Stomach (tissue), 19 donors: ENCODE measurements at regions of chr14 and their contacts with region 1.

Region 1: GRCh38 chr14:91177073-91178034 is 63.5 kb downstream of the DGLUCY start:
- DNase-seq: peak; percentile 65 to 84
- H3K4me3 ChIP-seq: no peak overlapping the region
- H3K27ac ChIP-seq: peak overlapping the region in 3 of 5 donors; percentile 11 to 47 (median 44)
- H3K4me1 ChIP-seq: peaks cover 0 to 22% (median 10%) of the 10 kb centered on the region in 4 donors
- H3K27me3 ChIP-seq: no peaks in the 10 kb centered on the region
- CTCF ChIP-seq: peak in 5 of 7 experiments; percentile 57 to 77 (median 65)
- EP300 ChIP-seq: no peak
- POLR2A ChIP-seq: no peak

Region 2: DNA sequence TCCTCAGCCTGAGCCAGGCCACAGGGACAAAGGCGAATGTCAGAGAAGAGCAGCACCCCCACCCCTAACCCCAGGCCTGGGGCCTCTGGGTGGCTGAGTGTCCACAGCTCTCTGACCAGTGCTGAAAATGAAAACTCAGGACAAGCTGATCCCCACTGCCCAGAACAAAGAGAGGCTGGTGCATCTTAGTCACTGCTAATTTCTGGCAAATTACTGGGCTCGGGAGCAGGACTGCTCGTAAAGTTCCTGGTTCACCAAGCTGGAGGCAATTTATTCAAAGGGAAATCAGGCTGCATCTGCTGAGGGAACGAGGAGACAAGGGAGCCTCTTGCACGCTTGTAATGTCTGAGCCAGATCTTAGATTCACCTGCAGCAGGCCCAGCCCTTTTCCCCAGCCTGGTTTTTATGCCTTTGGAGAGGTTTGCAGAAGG is 737.3 kb before region 1 on chr14:
- intact Hi-C with region 1: no loop called
- DNase-seq: no peak
- H3K4me3 ChIP-seq: no peak overlapping the region
- H3K27ac ChIP-seq: no peak overlapping the region
- H3K4me1 ChIP-seq: no peaks in the 10 kb centered on the region
- H3K27me3 ChIP-seq: no peaks in the 10 kb centered on the region
- CTCF ChIP-seq: no peak
- EP300 ChIP-seq: no peak
- POLR2A ChIP-seq: no peak

Region 3: DNA sequence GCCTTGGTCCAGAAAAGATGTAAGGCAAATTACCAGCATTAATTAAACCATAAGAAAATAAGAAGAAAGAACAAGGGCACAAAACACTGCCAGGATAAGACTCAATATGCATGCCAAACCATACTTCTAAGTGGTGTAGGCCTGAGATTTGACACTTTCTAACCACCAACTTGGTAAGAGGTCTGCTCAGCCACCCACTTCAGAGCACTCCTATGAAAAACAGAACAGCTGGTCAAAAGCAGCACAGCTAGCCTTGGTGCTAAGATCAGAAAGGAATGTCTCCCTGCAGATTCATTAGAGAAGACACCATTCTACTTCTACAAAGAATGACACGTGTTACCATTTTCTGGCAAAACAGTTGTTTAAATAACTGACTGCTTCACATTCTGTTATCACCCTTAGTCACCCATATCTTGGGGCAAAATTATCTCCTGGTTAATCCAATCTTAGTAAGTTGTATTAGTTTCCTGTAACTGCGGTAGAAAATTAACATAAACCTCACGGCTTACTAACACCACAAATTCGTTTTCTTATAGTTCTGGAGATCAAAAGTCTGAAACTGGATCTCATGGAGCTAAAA is 130.1 kb before region 1 on chr14:
- intact Hi-C with region 1: no loop called
- DNase-seq: no peak
- H3K4me3 ChIP-seq: no peak overlapping the region
- H3K27ac ChIP-seq: no peak overlapping the region
- H3K4me1 ChIP-seq: peaks cover 0 to 38% (median 15%) of the 10 kb centered on the region in 4 donors
- H3K27me3 ChIP-seq: no peaks in the 10 kb centered on the region
- CTCF ChIP-seq: no peak
- EP300 ChIP-seq: no peak
- POLR2A ChIP-seq: no peak

Region 4: GRCh38 chr14:91286530-91286937 is 109.2 kb after region 1 on chr14:
- intact Hi-C with region 1: loop called (anchors 5 kb)
- DNase-seq: peak; percentile 82 to 86
- H3K4me3 ChIP-seq: no peak overlapping the region
- H3K27ac ChIP-seq: no peak overlapping the region
- H3K4me1 ChIP-seq: peaks cover 6 to 21% (median 15%) of the 10 kb centered on the region in 4 donors
- H3K27me3 ChIP-seq: no peaks in the 10 kb centered on the region
- CTCF ChIP-seq: peak in 5 of 7 experiments; percentile 83 to 96 (median 86)
- EP300 ChIP-seq: no peak
- POLR2A ChIP-seq: no peak